Activated CD8-positive, alpha-beta memory T cell treated with anti-CD3 and anti-CD28 coated beads, Interleukin-2, amount 10 ng/mL, durations not matched to agents 7 days and 5 days (primary cell): ENCODE measurements at regions of chr12 and their contacts with region 1.

Region 1: DNA sequence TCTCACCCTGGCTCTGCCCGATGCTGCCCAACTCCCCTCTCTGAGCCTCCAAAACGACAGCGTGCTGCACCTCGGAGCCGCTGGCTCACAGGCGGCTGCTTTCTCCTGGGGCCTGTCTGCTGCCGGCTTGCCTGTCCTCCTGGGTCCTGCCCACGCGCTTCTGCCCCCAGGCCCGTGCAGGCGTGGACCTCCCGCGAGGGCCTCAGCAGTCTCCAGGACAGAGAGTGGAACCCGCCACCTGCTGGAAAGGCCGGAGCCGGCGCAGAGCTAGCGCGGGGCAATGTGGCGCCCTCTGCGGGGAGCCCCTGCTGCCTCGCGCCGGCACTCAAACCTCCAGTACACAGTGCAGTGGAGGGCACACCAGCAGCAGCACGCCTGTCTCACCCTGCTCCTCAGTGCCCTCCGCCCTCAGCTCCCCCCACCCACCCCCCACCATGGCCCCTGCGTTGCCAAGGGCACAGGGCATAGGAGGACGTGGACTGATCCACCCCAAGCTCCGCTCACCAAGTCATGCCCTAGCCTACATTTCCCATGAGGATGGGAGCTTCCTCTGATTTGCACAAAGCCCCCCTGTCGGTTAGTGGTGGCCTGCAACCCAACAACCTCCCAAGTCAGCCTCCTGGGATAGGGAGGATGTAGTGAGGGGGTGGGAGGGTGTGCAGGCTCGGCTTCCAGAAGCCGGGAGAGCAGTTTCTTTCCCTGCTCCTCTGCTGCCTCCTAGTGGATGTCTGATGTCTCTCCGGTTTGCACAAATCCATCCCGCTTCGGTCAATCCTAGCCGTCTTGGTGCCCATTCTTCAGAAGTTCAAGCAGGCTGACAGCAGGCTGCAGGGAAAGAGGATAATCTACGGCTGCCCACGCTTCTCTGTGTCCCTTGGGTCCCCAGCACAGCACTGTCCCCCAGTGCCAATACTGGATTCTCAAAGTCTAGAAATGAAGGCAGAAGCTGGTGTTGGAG is 25.2 kb downstream of the KRT8 start:
- DNase-seq: peak; percentile 78
- ATAC-seq: peak; percentile 94
- H3K4me3 Mint-ChIP-seq: no peak overlapping the region
- H3K27ac Mint-ChIP-seq: no peak overlapping the region
- H3K4me1 Mint-ChIP-seq: peaks cover 4% of the 10 kb centered on the region
- H3K27me3 Mint-ChIP-seq: peaks cover 12% of the 10 kb centered on the region

Region 2: DNA sequence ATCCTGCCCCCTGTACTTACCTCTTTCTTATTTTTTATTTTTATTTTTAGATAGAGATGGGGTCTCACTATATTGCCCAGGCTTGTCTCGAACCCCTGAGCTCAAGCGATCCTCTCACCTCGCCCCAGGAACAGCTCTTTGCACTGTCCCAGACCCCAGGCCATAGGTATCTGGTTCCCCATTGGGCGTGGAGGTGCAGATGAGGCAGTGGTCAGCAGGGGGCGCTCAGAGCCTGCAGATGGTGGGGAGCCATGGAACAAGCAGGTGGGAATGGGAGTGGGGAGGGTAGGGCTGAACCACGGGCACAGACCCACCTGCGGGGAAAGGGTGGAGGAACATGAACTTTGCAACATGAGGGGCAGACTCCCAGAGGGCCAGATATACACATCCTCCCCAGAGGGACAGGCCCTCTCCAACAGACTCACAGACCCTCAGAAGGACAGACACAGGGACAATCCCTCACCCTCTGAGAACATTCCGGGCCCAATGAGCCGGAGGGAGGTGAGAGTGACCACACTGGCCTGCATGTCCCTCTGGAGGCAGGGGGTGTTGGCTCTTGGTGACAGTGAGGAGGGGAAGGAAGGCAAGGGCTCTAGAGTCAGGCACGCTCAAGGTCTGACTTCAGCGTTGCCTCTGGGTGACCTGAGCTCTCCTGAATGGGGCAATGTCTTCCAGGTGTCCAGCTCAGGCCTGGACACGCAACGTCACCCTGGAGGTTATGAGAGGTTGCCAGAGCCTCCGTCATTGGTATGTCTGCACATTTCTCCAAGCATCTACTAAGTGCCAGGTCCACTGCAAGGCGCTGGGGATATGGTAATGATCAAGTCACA is 722.7 kb before region 1 on chr12:
- CTCF ChIA-PET with region 1: interaction called, 21 read pairs
- DNase-seq: peak; percentile 79
- ATAC-seq: peak; percentile 58
- H3K4me3 Mint-ChIP-seq: no peak overlapping the region
- H3K27ac Mint-ChIP-seq: no peak overlapping the region
- H3K4me1 Mint-ChIP-seq: peaks cover 26% of the 10 kb centered on the region
- H3K27me3 Mint-ChIP-seq: peaks cover 3% of the 10 kb centered on the region

Region 3: GRCh38 chr12:52539083-52539820 is 340.4 kb before region 1 on chr12:
- CTCF ChIA-PET with region 1: interaction called, 10 read pairs
- DNase-seq: no peak
- ATAC-seq: no peak
- H3K4me3 Mint-ChIP-seq: no peak overlapping the region
- H3K27ac Mint-ChIP-seq: no peak overlapping the region
- H3K4me1 Mint-ChIP-seq: peaks cover 6% of the 10 kb centered on the region
- H3K27me3 Mint-ChIP-seq: peaks cover 11% of the 10 kb centered on the region

Region 4: GRCh38 chr12:52895061-52895887 is 15.6 kb after region 1 on chr12:
- CTCF ChIA-PET with region 1: interaction called, 37 read pairs
- DNase-seq: no peak
- ATAC-seq: no peak
- H3K4me3 Mint-ChIP-seq: no peak overlapping the region
- H3K27ac Mint-ChIP-seq: no peak overlapping the region
- H3K4me1 Mint-ChIP-seq: no peaks in the 10 kb centered on the region
- H3K27me3 Mint-ChIP-seq: peaks cover 5% of the 10 kb centered on the region

Region 5: GRCh38 chr12:52992699-52993557 is 113.3 kb after region 1 on chr12:
- CTCF ChIA-PET with region 1: interaction called, 367 read pairs
- DNase-seq: no peak
- ATAC-seq: no peak
- H3K4me3 Mint-ChIP-seq: no peak overlapping the region
- H3K27ac Mint-ChIP-seq: no peak overlapping the region
- H3K4me1 Mint-ChIP-seq: no peaks in the 10 kb centered on the region
- H3K27me3 Mint-ChIP-seq: peaks cover 4% of the 10 kb centered on the region

Region 6: DNA sequence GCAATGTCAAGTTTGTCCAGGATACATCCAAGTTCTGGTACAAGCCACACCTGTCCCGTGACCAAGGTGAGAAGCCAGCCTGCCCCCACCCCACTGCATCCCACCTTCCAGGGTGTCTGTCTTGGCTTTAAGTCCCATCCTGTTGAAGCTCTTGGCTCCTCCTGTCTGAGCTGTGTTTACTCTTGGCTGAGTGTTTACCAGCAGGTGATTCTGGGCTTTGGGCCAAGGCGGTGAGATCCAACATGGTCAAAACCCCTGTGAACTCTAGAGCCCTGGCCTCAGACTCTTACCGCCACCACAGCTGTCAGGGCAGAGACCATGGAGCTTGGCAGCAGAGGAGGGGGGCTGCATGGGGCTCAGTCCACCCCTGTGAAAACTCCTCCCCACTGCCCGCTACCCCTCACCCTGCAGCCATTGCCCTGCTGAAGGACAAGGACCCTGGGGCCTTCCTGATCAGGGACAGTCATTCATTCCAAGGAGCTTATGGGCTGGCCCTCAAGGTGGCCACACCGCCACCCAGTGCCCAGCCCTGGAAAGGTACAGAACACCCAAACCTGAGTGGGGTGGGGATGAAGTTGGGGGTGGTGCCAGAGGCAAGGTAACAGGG is 181.8 kb after region 1 on chr12:
- CTCF ChIA-PET with region 1: no interaction called
- DNase-seq: peak; percentile 39
- ATAC-seq: no peak
- H3K4me3 Mint-ChIP-seq: no peak overlapping the region
- H3K27ac Mint-ChIP-seq: no peak overlapping the region
- H3K4me1 Mint-ChIP-seq: peaks cover 5% of the 10 kb centered on the region
- H3K27me3 Mint-ChIP-seq: no peaks in the 10 kb centered on the region